GM12878 (cell line): ENCODE measurements at regions of chr15 and their contacts with region 1.

Region 1: GRCh38 chr15:78177447-78177873 is 28.3 kb downstream of the IDH3A start:
- DNase-seq: no peak
- ATAC-seq: peak; percentile 77
- H3K4me3 ChIP-seq: no peak overlapping the region
- H3K27ac ChIP-seq: no peak overlapping the region
- H3K4me1 ChIP-seq: peaks cover 24% of the 10 kb centered on the region
- H3K27me3 ChIP-seq: no peaks in the 10 kb centered on the region
- CTCF ChIP-seq: peak; percentile 73 to 84 (median 76)
- EP300 ChIP-seq: no peak
- POLR2A ChIP-seq: no peak
- RAD21 ChIP-seq: peak; percentile 66

Region 2: GRCh38 chr15:77786181-77786890 is 391.1 kb before region 1 on chr15:
- CTCF ChIA-PET with region 1: no interaction called
- POLR2A ChIA-PET with region 1: no interaction called
- RAD21 ChIA-PET with region 1: no interaction called
- SMC1A ChIA-PET with region 1: no interaction called
- in situ Hi-C with region 1: no loop called
- intact Hi-C with region 1: no loop called
- DNase-seq: no peak
- ATAC-seq: no peak
- H3K4me3 ChIP-seq: no peak overlapping the region
- H3K27ac ChIP-seq: no peak overlapping the region
- H3K4me1 ChIP-seq: no peaks in the 10 kb centered on the region
- H3K27me3 ChIP-seq: no peaks in the 10 kb centered on the region
- CTCF ChIP-seq: no peak
- EP300 ChIP-seq: no peak
- POLR2A ChIP-seq: no peak
- RAD21 ChIP-seq: no peak

Region 3: DNA sequence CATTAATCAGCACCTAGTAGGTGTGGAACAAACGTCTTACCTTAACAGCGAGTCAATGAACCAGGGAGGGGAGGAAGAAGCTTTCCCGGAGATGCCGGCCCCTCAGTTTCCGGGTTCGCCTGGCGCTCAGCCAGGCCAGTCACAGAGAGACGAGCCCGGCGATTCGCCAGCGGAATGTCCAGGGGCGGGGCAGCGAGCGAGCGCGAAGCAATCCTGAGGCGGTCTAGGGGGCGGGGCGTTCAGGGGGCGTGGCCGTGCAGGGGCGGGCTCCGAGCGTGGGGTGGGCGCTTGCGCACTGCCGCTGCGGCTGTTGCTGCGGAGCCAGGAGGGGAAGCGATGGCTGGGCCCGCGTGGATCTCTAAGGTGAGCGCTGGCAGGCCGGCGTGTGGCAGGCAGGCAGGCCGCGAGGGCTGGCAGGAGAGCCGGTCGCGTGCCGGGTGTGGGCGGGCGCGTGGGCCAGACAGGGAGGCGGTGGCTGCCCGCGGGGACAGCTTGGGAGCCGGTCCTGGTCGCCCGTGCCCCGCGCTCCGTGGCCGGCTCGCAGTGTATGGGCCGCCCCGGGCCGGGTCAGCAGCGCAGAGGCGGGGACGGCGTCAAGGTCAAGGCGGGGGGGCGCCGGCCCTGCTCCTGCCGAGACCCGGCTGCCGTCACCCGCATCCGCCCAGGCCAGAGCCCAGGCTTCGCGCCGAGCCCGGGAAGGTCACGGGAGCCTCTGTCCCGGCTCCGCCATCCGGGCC is 28.2 kb before region 1 on chr15 and contains the start of gene IDH3A:
- CTCF ChIA-PET with region 1: interaction called, 38 read pairs
- POLR2A ChIA-PET with region 1: interaction called, 75 read pairs
- RAD21 ChIA-PET with region 1: interaction called, 53 read pairs
- SMC1A ChIA-PET with region 1: interaction called, 152 read pairs
- in situ Hi-C with region 1: no loop called
- intact Hi-C with region 1: no loop called
- DNase-seq: peak; percentile 80
- ATAC-seq: peak; percentile 91
- H3K4me3 ChIP-seq: peak within 1 kb of the TSS; percentile 87
- H3K27ac ChIP-seq: peak within 1 kb of the TSS; percentile 84
- H3K4me1 ChIP-seq: peaks cover 13% of the 10 kb centered on the region
- H3K27me3 ChIP-seq: no peaks in the 10 kb centered on the region
- CTCF ChIP-seq: no peak
- EP300 ChIP-seq: no peak
- POLR2A ChIP-seq: peak; percentile 94
- RAD21 ChIP-seq: no peak
- polyA plus RNA-seq, gene IDH3A: 197 to 231 TPM

Region 4: DNA sequence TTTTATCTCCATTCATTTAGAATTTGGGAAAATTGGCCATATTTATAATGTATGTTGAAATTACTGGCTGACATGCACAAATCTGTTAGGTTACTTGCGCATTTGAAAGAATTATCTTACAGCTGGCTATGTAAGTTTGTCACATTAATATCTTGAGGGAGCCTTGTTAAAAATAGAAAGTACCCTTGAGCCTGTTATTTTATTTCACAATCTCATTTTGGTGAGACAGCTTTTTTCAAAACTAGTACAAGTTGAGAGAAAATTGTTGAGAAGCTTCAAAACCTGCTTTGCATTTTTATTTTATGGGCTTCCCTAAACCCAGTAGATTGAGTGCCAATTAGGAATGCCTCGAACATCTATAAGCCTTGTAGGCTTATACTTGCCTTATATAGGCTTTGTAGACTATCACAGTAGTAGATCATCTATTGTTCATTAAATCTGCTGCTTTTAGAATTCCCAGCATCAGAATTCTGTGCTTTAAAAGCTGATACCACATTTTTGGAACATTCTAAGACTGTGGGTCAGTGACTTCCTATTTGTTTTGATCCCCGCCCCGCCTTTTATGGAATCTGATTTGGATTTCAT is 22.0 kb before region 1 on chr15:
- CTCF ChIA-PET with region 1: interaction called, 38 read pairs
- POLR2A ChIA-PET with region 1: interaction called, 75 read pairs
- RAD21 ChIA-PET with region 1: interaction called, 53 read pairs
- SMC1A ChIA-PET with region 1: interaction called, 152 read pairs
- in situ Hi-C with region 1: no loop called
- intact Hi-C with region 1: no loop called
- DNase-seq: no peak
- ATAC-seq: no peak
- H3K4me3 ChIP-seq: no peak overlapping the region
- H3K27ac ChIP-seq: no peak overlapping the region
- H3K4me1 ChIP-seq: peaks cover 6% of the 10 kb centered on the region
- H3K27me3 ChIP-seq: no peaks in the 10 kb centered on the region
- CTCF ChIP-seq: no peak
- EP300 ChIP-seq: no peak
- POLR2A ChIP-seq: no peak
- RAD21 ChIP-seq: no peak

Region 5: GRCh38 chr15:78308422-78309032 is 131.1 kb after region 1 on chr15:
- CTCF ChIA-PET with region 1: no interaction called
- POLR2A ChIA-PET with region 1: no interaction called
- RAD21 ChIA-PET with region 1: no interaction called
- SMC1A ChIA-PET with region 1: no interaction called
- in situ Hi-C with region 1: no loop called
- intact Hi-C with region 1: no loop called
- DNase-seq: no peak
- ATAC-seq: peak; percentile 96
- H3K4me3 ChIP-seq: no peak overlapping the region
- H3K27ac ChIP-seq: no peak overlapping the region
- H3K4me1 ChIP-seq: no peaks in the 10 kb centered on the region
- H3K27me3 ChIP-seq: no peaks in the 10 kb centered on the region
- CTCF ChIP-seq: peak; percentile 74 to 95 (median 90)
- EP300 ChIP-seq: no peak
- POLR2A ChIP-seq: no peak
- RAD21 ChIP-seq: peak; percentile 85